H1 (cell line): ENCODE measurements at regions of chr17 and their contacts with region 1.

Region 1: GRCh38 chr17:44376124-44376523 is 12.5 kb upstream of the FAM171A2 start:
- DNase-seq: peak in 1 of 2 experiments; percentile 87
- H3K4me3 ChIP-seq: no peak overlapping the region
- H3K27ac ChIP-seq: no peak overlapping the region
- H3K4me1 ChIP-seq: peaks cover 4 to 20% (median 14%) of the 10 kb centered on the region in 4 experiments; a peak in 6 of 7 replicates
- H3K27me3 ChIP-seq: no peaks in the 10 kb centered on the region; a peak in 1 of 7 replicates
- CTCF ChIP-seq: peak; percentile 76 to 81 (median 79)
- EP300 ChIP-seq: no peak
- POLR2A ChIP-seq: no peak
- RAD21 ChIP-seq: peak in 1 of 2 experiments; percentile 33; a peak in 2 of 4 replicates

Region 2: DNA sequence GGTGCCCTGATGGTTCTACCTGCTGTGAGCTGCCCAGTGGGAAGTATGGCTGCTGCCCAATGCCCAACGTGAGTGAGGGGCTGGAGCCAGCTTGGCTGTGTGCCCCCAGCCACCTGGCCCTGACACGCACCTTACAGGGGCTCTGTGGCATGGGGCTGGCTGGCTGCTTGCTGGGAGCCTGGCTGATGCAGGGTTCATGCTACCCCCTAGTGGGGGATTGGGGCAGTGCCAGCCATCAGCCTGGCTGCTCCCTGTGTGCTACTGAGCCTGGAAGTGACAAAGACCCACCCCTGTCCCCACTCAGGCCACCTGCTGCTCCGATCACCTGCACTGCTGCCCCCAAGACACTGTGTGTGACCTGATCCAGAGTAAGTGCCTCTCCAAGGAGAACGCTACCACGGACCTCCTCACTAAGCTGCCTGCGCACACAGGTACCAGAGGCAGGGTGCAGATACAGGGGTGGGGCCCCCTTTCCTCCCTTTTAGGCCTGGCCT is 25.3 kb before region 1 on chr17:
- CTCF ChIA-PET with region 1: interaction called, 177 read pairs
- POLR2A ChIA-PET with region 1: interaction called, 18 read pairs
- DNase-seq: peak in 1 of 2 experiments; percentile 90
- H3K4me3 ChIP-seq: no peak overlapping the region
- H3K27ac ChIP-seq: no peak overlapping the region
- H3K4me1 ChIP-seq: peaks cover 0 to 8% (median 4%) of the 10 kb centered on the region in 4 experiments; a peak in 4 of 7 replicates
- H3K27me3 ChIP-seq: no peaks in the 10 kb centered on the region; a peak in 2 of 7 replicates
- CTCF ChIP-seq: peak; percentile 82 to 95 (median 90)
- EP300 ChIP-seq: no peak
- POLR2A ChIP-seq: no peak
- RAD21 ChIP-seq: peak; percentile 81 to 82

Region 3: GRCh38 chr17:44394833-44395232 is 18.7 kb after region 1 on chr17:
- CTCF ChIA-PET with region 1: interaction called, 10 read pairs
- POLR2A ChIA-PET with region 1: interaction called, 4 read pairs
- DNase-seq: no peak
- H3K4me3 ChIP-seq: no peak overlapping the region
- H3K27ac ChIP-seq: no peak overlapping the region
- H3K4me1 ChIP-seq: no peaks in the 10 kb centered on the region
- H3K27me3 ChIP-seq: no peaks in the 10 kb centered on the region
- CTCF ChIP-seq: no peak
- EP300 ChIP-seq: no peak
- POLR2A ChIP-seq: no peak
- RAD21 ChIP-seq: no peak

Region 4: GRCh38 chr17:44432254-44433157 is 56.4 kb after region 1 on chr17:
- CTCF ChIA-PET with region 1: no interaction called
- POLR2A ChIA-PET with region 1: no interaction called
- DNase-seq: no peak
- H3K4me3 ChIP-seq: no peak overlapping the region
- H3K27ac ChIP-seq: no peak overlapping the region
- H3K4me1 ChIP-seq: no peaks in the 10 kb centered on the region
- H3K27me3 ChIP-seq: no peaks in the 10 kb centered on the region
- CTCF ChIP-seq: no peak
- EP300 ChIP-seq: no peak
- POLR2A ChIP-seq: no peak
- RAD21 ChIP-seq: no peak